CD4-positive, alpha-beta memory T cell (primary cell): ENCODE measurements at regions of chr3 and their contacts with region 1.

Region 1: GRCh38 chr3:105518806-105519418 is 152.2 kb downstream of the ALCAM start:
- DNase-seq: peak in 4 of 5 donors; percentile 41 to 50 (median 44)
- H3K4me3 ChIP-seq: no peak overlapping the region
- H3K4me3 Mint-ChIP-seq: peak overlapping the region in 1 of 8 donors; percentile 29
- H3K27ac ChIP-seq: no peak overlapping the region
- H3K27ac Mint-ChIP-seq: peak overlapping the region in 1 of 7 donors; percentile 37
- H3K4me1 ChIP-seq: no peaks in the 10 kb centered on the region
- H3K4me1 Mint-ChIP-seq: peaks cover 0 to 4% (median 4%) of the 10 kb centered on the region in 4 donors
- H3K27me3 ChIP-seq: no peaks in the 10 kb centered on the region
- H3K27me3 Mint-ChIP-seq: no peaks in the 10 kb centered on the region

Region 2: GRCh38 chr3:104564045-104564643 is 954.8 kb before region 1 on chr3:
- CTCF ChIA-PET with region 1: no interaction called
- POLR2A ChIA-PET with region 1: no interaction called
- intact Hi-C with region 1: loop called (anchors 1 kb)
- DNase-seq: peak; percentile 46 to 58 (median 55)
- H3K4me3 ChIP-seq: no peak overlapping the region
- H3K4me3 Mint-ChIP-seq: no peak overlapping the region
- H3K27ac ChIP-seq: no peak overlapping the region
- H3K27ac Mint-ChIP-seq: no peak overlapping the region
- H3K4me1 ChIP-seq: no peaks in the 10 kb centered on the region
- H3K4me1 Mint-ChIP-seq: no peaks in the 10 kb centered on the region
- H3K27me3 ChIP-seq: no peaks in the 10 kb centered on the region
- H3K27me3 Mint-ChIP-seq: peaks cover 0 to 1% of the 10 kb centered on the region in 2 donors

Region 3: GRCh38 chr3:104596551-104596950 is 922.4 kb before region 1 on chr3:
- CTCF ChIA-PET with region 1: interaction called, 3 read pairs
- POLR2A ChIA-PET with region 1: no interaction called
- intact Hi-C with region 1: loop called (anchors 1 kb)
- DNase-seq: peak in 4 of 5 donors; percentile 7 to 28 (median 20)
- H3K4me3 ChIP-seq: no peak overlapping the region
- H3K4me3 Mint-ChIP-seq: no peak overlapping the region
- H3K27ac ChIP-seq: no peak overlapping the region
- H3K27ac Mint-ChIP-seq: no peak overlapping the region
- H3K4me1 ChIP-seq: no peaks in the 10 kb centered on the region
- H3K4me1 Mint-ChIP-seq: no peaks in the 10 kb centered on the region
- H3K27me3 ChIP-seq: no peaks in the 10 kb centered on the region
- H3K27me3 Mint-ChIP-seq: no peaks in the 10 kb centered on the region

Region 4: DNA sequence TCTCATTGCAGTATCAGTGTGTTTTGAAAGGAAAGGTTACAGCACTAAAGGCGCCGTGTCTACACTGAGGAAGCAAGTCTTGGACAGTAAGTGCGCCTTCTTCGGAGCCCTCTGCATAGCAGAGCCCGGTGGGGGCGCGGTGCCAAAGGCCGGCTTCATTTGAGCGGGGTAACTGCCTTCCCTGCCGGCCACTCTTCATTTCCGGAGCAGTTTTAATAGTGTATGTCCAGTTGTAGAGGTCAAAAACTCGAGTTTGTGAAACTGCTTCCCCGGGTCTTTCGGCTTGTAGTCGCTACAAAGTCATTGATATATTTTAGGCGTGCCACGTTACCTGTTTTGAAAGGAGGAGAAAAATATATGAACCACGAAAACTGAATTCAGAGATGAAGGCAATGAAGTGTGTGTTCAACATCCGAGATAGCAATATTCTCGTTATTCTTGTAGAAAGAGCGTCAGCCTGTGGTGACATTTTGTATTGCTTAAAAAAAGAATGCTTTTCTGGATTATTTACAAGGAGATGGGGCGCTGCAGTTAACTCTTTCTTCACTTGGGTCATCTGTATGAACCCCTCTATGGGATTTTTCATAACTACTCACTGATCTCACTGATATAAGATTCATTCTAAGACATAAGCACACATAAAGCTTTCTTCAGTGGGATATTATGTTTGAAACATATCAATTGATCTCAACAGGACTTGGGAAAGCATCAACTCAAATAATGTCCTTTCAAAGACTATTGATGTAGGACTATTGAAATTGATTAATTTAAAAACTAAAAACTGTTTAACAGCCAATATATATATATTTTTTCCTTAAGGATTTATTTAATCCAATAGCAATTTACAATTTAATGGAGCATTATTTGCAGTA is 149.2 kb before region 1 on chr3:
- CTCF ChIA-PET with region 1: interaction called, 5 read pairs
- POLR2A ChIA-PET with region 1: no interaction called
- intact Hi-C with region 1: loop called (anchors 1 kb)
- DNase-seq: peak; percentile 60 to 68 (median 63)
- H3K4me3 ChIP-seq: peak overlapping the region; percentile 67 to 80
- H3K4me3 Mint-ChIP-seq: peak overlapping the region; percentile 91 to 97 (median 96)
- H3K27ac ChIP-seq: peak overlapping the region; percentile 83
- H3K27ac Mint-ChIP-seq: peak overlapping the region; percentile 97 to 99 (median 99)
- H3K4me1 ChIP-seq: peaks cover 21% of the 10 kb centered on the region
- H3K4me1 Mint-ChIP-seq: peaks cover 13 to 45% (median 26%) of the 10 kb centered on the region in 4 donors
- H3K27me3 ChIP-seq: no peaks in the 10 kb centered on the region
- H3K27me3 Mint-ChIP-seq: peaks cover 2 to 14% of the 10 kb centered on the region in 2 donors

Region 5: GRCh38 chr3:105505170-105505569 is 13.7 kb before region 1 on chr3:
- CTCF ChIA-PET with region 1: interaction called, 17 read pairs
- POLR2A ChIA-PET with region 1: no interaction called
- intact Hi-C with region 1: no loop called
- DNase-seq: no peak
- H3K4me3 ChIP-seq: no peak overlapping the region
- H3K4me3 Mint-ChIP-seq: no peak overlapping the region
- H3K27ac ChIP-seq: no peak overlapping the region
- H3K27ac Mint-ChIP-seq: no peak overlapping the region
- H3K4me1 ChIP-seq: no peaks in the 10 kb centered on the region
- H3K4me1 Mint-ChIP-seq: no peaks in the 10 kb centered on the region
- H3K27me3 ChIP-seq: no peaks in the 10 kb centered on the region
- H3K27me3 Mint-ChIP-seq: no peaks in the 10 kb centered on the region

Region 6: DNA sequence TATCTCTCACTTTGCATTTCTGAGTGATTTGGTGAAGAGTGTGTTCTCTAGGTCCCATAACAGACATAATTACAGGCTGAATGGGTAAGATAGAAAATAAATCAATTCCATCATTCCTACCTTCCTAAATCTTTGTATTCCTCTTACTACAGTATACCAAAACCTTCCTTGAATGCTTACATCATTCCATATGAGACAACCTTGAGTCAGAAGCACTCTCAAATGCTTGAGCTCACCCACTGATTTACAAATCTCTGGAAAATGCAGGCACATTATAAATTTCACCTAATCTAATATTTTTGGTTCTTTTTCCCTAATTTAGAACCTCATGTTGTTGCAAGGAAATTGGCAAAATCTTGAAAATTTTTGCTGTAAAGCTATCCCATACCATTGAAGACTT is 110.8 kb after region 1 on chr3:
- CTCF ChIA-PET with region 1: no interaction called
- POLR2A ChIA-PET with region 1: no interaction called
- intact Hi-C with region 1: no loop called
- DNase-seq: no peak
- H3K4me3 ChIP-seq: no peak overlapping the region
- H3K4me3 Mint-ChIP-seq: no peak overlapping the region
- H3K27ac ChIP-seq: no peak overlapping the region
- H3K27ac Mint-ChIP-seq: no peak overlapping the region
- H3K4me1 ChIP-seq: no peaks in the 10 kb centered on the region
- H3K4me1 Mint-ChIP-seq: no peaks in the 10 kb centered on the region
- H3K27me3 ChIP-seq: no peaks in the 10 kb centered on the region
- H3K27me3 Mint-ChIP-seq: no peaks in the 10 kb centered on the region

Region 7: DNA sequence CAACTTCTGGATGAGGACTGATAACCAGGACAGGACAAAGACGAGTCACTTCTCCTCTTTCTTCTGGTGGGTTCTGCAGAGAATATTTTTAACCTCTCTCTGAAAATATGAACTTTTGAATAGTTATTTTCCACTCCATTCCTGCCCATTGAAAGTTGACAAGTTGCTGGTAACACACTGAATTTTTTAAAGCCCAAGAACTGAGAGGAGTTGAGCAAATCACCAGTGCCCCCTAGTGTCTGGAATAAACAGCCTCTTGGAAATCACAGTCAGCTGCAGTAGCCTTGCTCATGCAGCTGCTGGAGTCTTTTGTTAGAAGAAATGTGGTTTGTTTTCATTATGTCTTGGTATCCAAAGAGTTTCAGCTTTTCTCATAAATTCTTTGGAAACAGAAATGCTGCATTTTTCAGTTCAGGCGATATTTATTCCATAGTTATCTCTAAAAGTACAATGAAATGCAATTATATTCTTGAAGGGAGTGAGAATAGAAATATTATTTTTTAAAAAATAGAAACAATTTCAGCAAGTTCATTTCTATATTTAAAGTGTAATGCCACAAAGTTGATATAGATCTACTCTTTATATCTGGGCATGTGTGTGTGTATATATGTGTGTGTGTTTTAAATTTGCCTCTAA is 1090.9 kb after region 1 on chr3:
- CTCF ChIA-PET with region 1: interaction called, 6 read pairs
- POLR2A ChIA-PET with region 1: no interaction called
- intact Hi-C with region 1: loop called (anchors 1 kb)
- DNase-seq: peak; percentile 58 to 73 (median 68)
- H3K4me3 ChIP-seq: no peak overlapping the region
- H3K4me3 Mint-ChIP-seq: no peak overlapping the region
- H3K27ac ChIP-seq: no peak overlapping the region
- H3K27ac Mint-ChIP-seq: no peak overlapping the region
- H3K4me1 ChIP-seq: no peaks in the 10 kb centered on the region
- H3K4me1 Mint-ChIP-seq: peaks cover 1 to 6% (median 4%) of the 10 kb centered on the region in 4 donors
- H3K27me3 ChIP-seq: no peaks in the 10 kb centered on the region
- H3K27me3 Mint-ChIP-seq: peaks cover 0 to 1% of the 10 kb centered on the region in 2 donors

Region 8: DNA sequence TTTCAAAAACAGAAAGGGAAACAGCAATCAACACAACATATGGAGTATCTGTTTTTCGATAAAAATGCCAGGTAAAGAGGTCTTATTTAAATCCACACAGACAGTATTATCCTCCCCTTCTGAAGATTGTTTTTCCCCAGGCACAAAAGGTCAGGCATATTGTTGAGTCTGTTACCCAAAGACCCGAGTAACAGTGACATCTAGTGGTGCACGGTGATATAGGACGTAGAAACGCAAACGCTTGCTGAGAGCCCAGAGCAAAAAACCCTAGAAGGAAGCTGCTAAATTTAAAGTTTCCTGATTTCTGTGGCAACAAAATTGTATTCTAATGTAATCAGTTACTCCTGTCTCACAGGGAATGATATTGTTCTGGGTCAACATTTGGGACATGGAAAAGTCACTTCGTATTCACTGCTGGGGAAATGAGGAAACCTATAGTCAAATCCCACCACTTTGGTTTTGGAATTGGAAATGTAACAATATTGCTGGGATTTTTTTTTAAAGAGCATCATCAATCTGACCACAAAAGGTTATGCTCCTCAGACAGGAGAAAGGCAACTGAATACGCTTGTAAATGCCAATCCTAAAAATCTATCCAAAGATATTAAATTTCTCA is 1545.6 kb after region 1 on chr3:
- CTCF ChIA-PET with region 1: no interaction called
- POLR2A ChIA-PET with region 1: no interaction called
- intact Hi-C with region 1: loop called (anchors 5 kb)
- DNase-seq: peak; percentile 43 to 47 (median 44)
- H3K4me3 ChIP-seq: no peak overlapping the region
- H3K4me3 Mint-ChIP-seq: peak overlapping the region in 2 of 8 donors; percentile 7 to 61
- H3K27ac ChIP-seq: no peak overlapping the region
- H3K27ac Mint-ChIP-seq: no peak overlapping the region
- H3K4me1 ChIP-seq: peaks cover 3% of the 10 kb centered on the region
- H3K4me1 Mint-ChIP-seq: peaks cover 6 to 11% (median 8%) of the 10 kb centered on the region in 4 donors
- H3K27me3 ChIP-seq: no peaks in the 10 kb centered on the region
- H3K27me3 Mint-ChIP-seq: no peaks in the 10 kb centered on the region